ENCODE measurements at regions of chr9 and their contacts with region 1.

Region 1: DNA sequence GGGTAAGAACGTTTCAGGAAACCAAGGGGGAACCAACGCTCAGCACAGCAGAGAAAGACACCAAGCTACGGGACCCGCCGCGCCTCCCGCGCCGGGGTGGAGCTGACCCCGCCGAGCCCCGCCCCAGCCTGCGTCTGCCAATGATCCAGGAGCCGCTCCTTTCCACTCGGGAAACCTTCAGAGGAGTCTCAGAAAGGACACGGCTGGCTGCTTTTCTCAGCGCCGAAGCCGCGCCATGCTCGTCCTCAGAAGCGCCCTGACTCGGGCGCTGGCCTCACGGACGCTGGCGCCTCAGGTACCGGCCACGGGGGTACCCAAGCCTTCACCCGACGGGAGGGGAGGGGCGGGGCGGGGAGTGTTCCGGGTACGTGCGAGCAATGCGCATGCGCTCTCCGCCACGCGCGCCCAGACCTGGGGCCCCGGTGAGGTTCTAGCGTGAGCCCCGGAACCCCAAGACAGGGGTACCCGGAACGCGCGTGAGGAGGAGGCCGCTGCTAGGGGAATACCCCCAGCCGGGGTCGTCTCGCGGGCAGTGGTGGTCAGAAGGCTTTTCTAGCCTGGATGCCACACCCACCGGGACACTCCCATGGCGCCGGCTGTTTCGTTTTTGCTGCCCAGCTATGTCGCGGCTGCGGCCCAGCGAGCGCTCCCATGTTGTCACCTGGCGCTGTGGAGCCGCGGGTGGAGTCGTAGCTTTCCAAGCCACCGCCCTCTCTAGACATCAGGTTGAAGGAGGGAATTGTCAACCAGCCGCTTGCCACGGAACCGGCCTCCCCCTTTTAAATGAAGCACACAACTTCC is at the start of gene NIPSNAP3A:
- DNase-seq: peak; percentile 85
- H3K4me3 Mint-ChIP-seq: peak within 1 kb of the TSS; percentile 94
- H3K27ac Mint-ChIP-seq: peak within 1 kb of the TSS; percentile 98
- H3K4me1 Mint-ChIP-seq: peaks cover 46% of the 10 kb centered on the region
- H3K27me3 Mint-ChIP-seq: peaks cover 2% of the 10 kb centered on the region
- total RNA-seq, gene NIPSNAP3A: 8.3 and 9.2 TPM in 2 replicates

Region 2: DNA sequence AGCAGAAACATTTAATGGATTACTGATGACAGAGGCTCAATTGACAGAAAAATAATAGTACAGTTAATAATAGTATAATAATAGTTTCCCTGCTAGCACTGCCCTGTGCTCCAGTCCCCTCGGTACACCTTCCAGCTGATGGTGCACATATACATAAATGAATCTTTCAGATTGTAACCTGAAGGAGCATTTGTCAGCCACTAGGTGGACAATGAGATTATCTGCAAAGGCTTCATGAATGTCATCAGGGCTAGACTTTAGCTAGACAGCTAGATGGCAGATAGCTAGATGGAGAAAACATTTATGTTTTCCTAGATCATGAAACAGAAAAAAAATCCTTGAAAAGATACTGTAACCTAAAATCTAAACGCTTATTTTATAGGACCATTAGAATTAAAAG is 958.1 kb before region 1 on chr9:
- intact Hi-C with region 1: loop called (anchors 5 kb)
- DNase-seq: no peak
- H3K4me3 Mint-ChIP-seq: no peak overlapping the region
- H3K27ac Mint-ChIP-seq: no peak overlapping the region
- H3K4me1 Mint-ChIP-seq: no peaks in the 10 kb centered on the region
- H3K27me3 Mint-ChIP-seq: no peaks in the 10 kb centered on the region

Region 3: DNA sequence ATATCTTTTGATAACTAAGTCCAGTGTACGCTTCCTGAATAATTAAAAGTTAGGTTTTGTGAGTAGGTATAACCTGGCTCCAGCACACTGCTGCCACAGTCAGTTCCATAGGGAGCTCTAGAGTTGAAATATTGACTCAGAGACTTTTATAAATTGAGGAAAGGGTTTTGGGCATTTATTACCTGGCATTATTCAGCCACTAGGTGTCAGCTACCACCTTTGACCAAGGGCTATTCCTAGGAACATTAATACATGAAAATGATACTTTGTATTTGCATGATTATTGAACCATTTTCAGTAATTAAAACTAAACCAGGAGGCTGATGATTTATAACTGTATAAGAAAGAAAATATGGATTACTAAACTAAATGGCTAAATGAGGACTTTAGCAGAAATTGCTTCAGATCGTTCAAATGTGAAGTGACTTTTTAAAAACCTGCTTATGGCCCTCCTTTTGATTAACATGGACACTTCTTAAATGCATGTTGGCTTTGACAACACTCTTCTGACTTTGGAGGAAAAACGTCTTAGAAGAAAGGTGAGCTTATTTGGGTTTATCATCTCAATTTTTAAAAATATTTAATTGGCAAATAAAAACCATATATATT is 570.7 kb before region 1 on chr9:
- intact Hi-C with region 1: loop called (anchors 5 kb)
- DNase-seq: no peak
- H3K4me3 Mint-ChIP-seq: no peak overlapping the region
- H3K27ac Mint-ChIP-seq: no peak overlapping the region
- H3K4me1 Mint-ChIP-seq: no peaks in the 10 kb centered on the region
- H3K27me3 Mint-ChIP-seq: peaks cover 4% of the 10 kb centered on the region

Region 4: GRCh38 chr9:104429031-104429546 is 318.7 kb before region 1 on chr9:
- intact Hi-C with region 1: no loop called
- DNase-seq: no peak
- H3K4me3 Mint-ChIP-seq: no peak overlapping the region
- H3K27ac Mint-ChIP-seq: no peak overlapping the region
- H3K4me1 Mint-ChIP-seq: no peaks in the 10 kb centered on the region
- H3K27me3 Mint-ChIP-seq: no peaks in the 10 kb centered on the region

Region 5: GRCh38 chr9:104765138-104765537 is 17.4 kb after region 1 on chr9:
- intact Hi-C with region 1: loop called (anchors 1 kb)
- DNase-seq: no peak
- H3K4me3 Mint-ChIP-seq: peak overlapping the region; percentile 91
- H3K27ac Mint-ChIP-seq: no peak overlapping the region
- H3K4me1 Mint-ChIP-seq: peaks cover 8% of the 10 kb centered on the region
- H3K27me3 Mint-ChIP-seq: peaks cover 10% of the 10 kb centered on the region

Region 6: GRCh38 chr9:105244003-105244733 is 496.4 kb after region 1 on chr9 and contains the start of gene SLC44A1:
- intact Hi-C with region 1: loop called (anchors 1 kb)
- DNase-seq: peak; percentile 93
- H3K4me3 Mint-ChIP-seq: peak within 1 kb of the TSS; percentile 88
- H3K27ac Mint-ChIP-seq: peak within 1 kb of the TSS; percentile 69
- H3K4me1 Mint-ChIP-seq: peaks cover 31% of the 10 kb centered on the region
- H3K27me3 Mint-ChIP-seq: peaks cover 62% of the 10 kb centered on the region
- total RNA-seq, gene SLC44A1: 3.7 and 3.8 TPM in 2 replicates

Region 7: DNA sequence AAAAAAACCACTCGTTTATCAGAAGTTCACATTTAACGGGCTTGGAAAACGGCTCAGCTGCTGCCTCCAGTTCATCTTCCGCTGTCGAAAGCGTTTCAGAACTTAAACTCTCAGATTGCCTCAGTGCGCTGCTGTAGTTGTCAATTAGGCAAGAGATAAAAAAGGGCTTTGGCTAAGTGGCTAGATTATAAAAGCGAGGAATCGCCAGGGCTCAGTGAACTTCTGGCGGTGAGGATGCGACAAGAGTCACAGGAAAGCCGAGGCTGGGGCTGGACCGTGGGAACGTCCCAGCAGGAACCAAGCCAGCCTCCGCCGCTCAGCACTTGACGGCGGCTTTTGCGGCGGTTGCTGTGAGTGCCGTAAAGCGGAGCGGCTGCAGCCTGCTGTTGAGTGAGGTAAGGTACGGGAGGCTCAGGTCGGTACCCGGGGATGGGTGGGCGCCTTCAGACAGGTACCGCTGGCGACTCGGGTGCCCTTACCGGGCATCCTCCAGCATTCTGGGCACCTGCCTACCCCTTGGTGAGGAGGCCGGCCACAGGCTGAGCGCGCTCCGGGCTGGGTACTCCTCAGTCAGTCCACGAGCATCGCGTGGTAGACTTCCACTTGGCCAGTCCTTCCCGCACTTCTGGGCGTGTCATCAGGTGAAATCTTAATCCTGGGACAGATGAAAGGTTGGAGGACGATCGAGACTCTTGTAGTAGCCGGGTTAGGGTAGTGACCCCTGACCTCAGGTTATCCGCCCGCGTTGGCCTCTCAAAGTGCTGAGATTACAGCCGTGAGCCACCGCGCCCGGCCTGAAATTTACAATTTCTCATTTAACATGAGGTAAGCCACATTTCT is 810.2 kb after region 1 on chr9 and contains the start of gene FKTN:
- intact Hi-C with region 1: loop called (anchors 5 kb)
- DNase-seq: peak; percentile 76
- H3K4me3 Mint-ChIP-seq: peak within 1 kb of the TSS; percentile 94
- H3K27ac Mint-ChIP-seq: peak within 1 kb of the TSS; percentile 71
- H3K4me1 Mint-ChIP-seq: peaks cover 22% of the 10 kb centered on the region
- H3K27me3 Mint-ChIP-seq: no peaks in the 10 kb centered on the region
- total RNA-seq, gene FKTN: 12.4 and 12.6 TPM in 2 replicates